Activated CD4-positive, alpha-beta memory T cell treated with anti-CD3 and anti-CD28 coated beads, Interleukin-2, amount 10 ng/mL, durations not matched to agents 7 days and 5 days (primary cell): ENCODE measurements at regions of chr18 and their contacts with region 1.

Region 1: DNA sequence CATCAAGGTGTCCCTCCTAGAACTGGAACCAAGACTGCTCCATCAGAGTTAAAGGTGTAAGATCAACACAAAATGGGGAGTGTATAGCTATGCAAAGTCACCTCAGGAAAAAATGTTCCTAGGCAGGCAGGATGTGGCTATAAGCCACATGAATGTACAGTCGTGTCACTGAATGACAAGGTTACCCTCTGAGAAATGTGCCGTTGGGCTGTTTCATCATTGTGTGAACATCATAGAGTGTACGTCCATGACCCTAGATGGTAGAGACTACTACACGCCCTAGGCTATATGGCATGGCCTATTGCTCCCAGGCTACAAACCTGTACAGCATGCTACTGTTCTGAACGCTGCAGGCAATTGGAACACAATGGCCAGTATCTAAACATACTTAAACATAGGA is 24.5 kb downstream of the TYMS start:
- DNase-seq: peak; percentile 82
- H3K4me3 Mint-ChIP-seq: peak overlapping the region; percentile 28
- H3K27ac Mint-ChIP-seq: peak overlapping the region; percentile 90
- H3K4me1 Mint-ChIP-seq: peaks cover 36% of the 10 kb centered on the region
- H3K27me3 Mint-ChIP-seq: no peaks in the 10 kb centered on the region

Region 2: GRCh38 chr18:670522-670921 is 11.5 kb before region 1 on chr18:
- CTCF ChIA-PET with region 1: interaction called, 3 read pairs
- POLR2A ChIA-PET with region 1: interaction called, 12 read pairs
- DNase-seq: no peak
- H3K4me3 Mint-ChIP-seq: no peak overlapping the region
- H3K27ac Mint-ChIP-seq: peak overlapping the region; percentile 47
- H3K4me1 Mint-ChIP-seq: peaks cover 20% of the 10 kb centered on the region
- H3K27me3 Mint-ChIP-seq: no peaks in the 10 kb centered on the region

Region 3: GRCh38 chr18:723541-724080 is 41.6 kb after region 1 on chr18:
- CTCF ChIA-PET with region 1: no interaction called
- POLR2A ChIA-PET with region 1: no interaction called
- DNase-seq: no peak
- H3K4me3 Mint-ChIP-seq: no peak overlapping the region
- H3K27ac Mint-ChIP-seq: no peak overlapping the region
- H3K4me1 Mint-ChIP-seq: peaks cover 2% of the 10 kb centered on the region
- H3K27me3 Mint-ChIP-seq: no peaks in the 10 kb centered on the region

Region 4: GRCh38 chr18:750456-750855 is 68.5 kb after region 1 on chr18:
- CTCF ChIA-PET with region 1: no interaction called
- POLR2A ChIA-PET with region 1: no interaction called
- DNase-seq: no peak
- H3K4me3 Mint-ChIP-seq: no peak overlapping the region
- H3K27ac Mint-ChIP-seq: no peak overlapping the region
- H3K4me1 Mint-ChIP-seq: no peaks in the 10 kb centered on the region
- H3K27me3 Mint-ChIP-seq: no peaks in the 10 kb centered on the region

Region 5: DNA sequence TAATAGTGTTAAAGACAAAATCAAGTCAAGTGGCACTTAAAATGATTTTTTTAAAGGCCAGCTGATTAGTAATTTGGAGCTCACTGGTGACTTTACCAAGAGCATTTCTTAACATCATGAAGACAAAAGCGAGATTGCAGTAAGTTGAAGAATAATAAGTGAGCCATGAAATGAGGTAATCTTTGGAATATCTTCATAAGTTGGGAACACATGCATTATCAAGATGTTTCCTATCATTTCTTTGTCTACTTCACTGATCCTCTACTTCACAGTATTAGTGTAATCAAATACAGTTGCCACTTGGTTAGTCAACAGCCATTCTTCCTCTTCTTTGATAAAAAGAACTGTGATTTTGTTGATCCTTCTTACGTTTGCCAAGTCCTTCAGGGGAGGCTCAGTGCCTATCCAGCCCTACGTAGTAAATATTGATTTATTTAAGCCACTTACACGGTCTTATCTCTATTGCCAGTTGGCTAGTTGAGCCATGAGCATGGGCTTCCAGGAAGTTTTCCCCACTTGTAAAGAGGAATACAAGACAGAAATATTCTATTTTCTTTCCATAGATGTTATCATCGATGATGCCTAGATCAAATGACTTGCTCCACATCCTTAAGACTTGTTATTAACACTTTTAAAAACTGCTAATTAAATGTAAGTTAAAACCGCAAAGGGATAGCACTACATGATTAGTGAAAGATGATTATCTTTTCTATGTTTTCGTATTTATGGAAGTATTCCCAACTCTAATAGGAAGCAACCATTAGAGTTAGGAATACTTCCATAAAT is 84.0 kb after region 1 on chr18:
- CTCF ChIA-PET with region 1: no interaction called
- POLR2A ChIA-PET with region 1: no interaction called
- DNase-seq: no peak
- H3K4me3 Mint-ChIP-seq: no peak overlapping the region
- H3K27ac Mint-ChIP-seq: no peak overlapping the region
- H3K4me1 Mint-ChIP-seq: peaks cover 5% of the 10 kb centered on the region
- H3K27me3 Mint-ChIP-seq: no peaks in the 10 kb centered on the region